OCI-LY7 (cell line): ENCODE measurements at regions of chrX and their contacts with region 1.

Region 1: DNA sequence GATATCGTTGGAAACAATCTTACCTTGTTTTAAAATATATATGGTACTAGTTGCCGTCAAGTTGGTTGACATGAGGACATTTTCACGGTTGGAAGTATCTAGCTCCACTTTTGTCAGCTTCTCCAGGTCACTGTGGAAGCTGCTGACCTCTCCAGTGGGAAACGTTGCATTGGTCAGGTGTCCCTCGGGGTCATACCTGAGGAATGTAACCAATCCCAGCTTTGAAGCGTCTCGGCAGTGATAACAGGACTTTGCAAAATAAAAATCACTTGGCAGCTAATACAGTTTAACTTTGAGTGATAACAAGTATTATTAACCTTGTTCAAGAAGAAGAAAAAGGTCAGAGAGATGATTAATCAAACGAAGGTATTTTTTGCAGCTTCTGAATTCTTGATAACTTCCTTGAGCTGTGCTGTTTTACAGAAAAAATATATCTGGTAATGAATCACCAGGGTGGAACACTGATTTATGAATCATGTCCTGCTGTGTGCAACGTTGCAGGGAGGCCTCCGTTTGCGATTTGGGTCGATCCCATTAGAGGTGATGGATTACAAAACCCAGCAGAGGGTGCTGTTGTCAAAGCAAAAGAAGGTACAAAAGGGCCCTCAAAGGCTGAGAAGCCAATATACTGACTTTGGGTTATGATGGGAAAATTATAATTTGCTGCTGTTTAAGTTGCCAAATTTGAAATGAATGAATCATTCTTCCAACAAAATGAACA is 60.1 kb downstream of the SH2D1A start:
- DNase-seq: peak; percentile 79
- H3K4me3 ChIP-seq: no peak overlapping the region
- H3K27ac ChIP-seq: peak overlapping the region; percentile 28
- H3K4me1 ChIP-seq: peaks cover 55% of the 10 kb centered on the region
- CTCF ChIP-seq: peak; percentile 80

Region 2: DNA sequence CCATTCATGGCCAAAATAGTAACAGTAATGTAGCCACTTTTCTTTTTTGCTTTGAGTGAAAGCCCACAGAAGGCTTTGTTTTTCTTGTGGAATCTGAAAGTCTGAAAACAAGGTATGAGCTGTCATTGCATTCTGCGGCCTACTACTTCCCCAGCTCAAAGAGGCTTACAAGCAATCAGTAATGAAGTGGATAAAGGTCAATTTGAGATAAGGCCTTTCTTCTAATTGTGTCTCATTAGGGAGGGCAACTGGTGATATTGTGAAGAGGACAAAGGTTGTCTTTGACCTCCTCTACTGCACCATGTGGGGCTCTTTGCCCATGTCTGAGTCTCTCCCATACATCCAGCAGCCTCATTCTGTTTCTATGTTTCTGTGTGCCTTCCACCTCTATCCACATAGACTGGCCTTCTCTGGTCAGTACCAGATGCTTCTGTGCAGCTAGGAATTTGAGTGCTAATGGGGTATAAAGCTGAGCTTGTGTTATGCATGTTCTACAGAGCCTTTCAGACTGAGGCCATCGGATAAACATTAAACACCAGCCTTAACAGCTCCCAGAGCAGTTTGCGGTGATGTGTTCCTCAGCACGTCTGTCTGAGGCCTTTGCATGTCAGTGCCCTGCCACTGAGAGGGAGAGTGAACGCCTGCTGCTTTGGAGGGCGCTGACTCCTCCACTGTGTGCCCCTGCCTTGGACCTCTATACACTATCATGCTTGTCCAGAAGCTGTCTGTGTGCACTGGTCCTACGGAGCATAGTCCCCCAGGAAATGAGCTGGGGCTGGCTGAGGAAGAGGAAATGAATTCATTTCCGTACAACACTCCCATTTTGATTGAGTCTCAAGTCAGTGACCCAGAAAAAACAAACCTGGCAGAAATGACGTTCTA is 20.1 kb after region 1 on chrX:
- CTCF ChIA-PET with region 1: no interaction called
- POLR2A ChIA-PET with region 1: no interaction called
- intact Hi-C with region 1: no loop called
- DNase-seq: no peak
- H3K4me3 ChIP-seq: no peak overlapping the region
- H3K27ac ChIP-seq: no peak overlapping the region
- H3K4me1 ChIP-seq: no peaks in the 10 kb centered on the region
- CTCF ChIP-seq: no peak

Region 3: DNA sequence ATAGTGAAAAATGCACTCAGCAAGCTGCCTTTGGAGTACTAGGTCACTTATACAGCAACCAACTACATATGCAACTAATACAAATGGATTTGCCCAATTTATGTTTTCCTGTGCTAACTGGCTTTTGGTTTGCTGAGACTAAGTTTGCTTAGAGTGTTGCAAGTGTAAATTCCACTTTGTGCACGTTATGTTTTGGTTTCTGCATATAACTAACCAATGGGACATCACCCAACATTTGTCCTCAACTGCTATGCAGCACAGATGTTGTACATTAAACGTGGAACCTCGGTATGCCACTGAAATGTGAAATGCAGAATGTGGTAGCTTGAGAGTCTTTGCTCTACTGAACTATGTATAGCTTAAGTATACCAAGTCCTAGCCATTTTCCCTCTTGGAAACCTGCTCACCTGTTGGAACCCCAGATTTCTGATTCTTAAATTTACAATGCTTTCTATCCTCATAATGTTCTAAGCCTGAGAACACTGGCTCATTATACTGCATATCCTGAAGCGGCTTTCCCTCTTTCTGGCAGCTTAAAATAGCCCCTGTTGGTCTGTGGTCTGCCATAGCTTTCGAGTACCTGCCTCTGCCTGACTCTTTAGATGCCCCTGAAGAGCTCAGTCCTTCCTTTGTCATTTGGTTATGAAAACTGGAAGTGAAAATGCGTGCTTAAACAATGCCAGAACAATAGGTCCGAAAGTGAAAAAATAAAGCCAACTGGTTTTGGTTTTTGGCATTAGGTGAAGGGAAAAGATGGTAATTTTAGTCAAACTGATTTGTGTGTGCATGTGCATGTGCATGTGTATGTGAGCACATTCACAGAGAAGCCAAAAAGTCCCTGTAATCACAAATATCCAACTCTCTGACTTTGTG is 97.9 kb after region 1 on chrX:
- CTCF ChIA-PET with region 1: no interaction called
- POLR2A ChIA-PET with region 1: no interaction called
- intact Hi-C with region 1: loop called (anchors 10 kb)
- DNase-seq: peak; percentile 79
- H3K4me3 ChIP-seq: peak overlapping the region; percentile 44
- H3K27ac ChIP-seq: peak overlapping the region; percentile 73
- H3K4me1 ChIP-seq: peaks cover 32% of the 10 kb centered on the region
- CTCF ChIP-seq: no peak

Region 4: DNA sequence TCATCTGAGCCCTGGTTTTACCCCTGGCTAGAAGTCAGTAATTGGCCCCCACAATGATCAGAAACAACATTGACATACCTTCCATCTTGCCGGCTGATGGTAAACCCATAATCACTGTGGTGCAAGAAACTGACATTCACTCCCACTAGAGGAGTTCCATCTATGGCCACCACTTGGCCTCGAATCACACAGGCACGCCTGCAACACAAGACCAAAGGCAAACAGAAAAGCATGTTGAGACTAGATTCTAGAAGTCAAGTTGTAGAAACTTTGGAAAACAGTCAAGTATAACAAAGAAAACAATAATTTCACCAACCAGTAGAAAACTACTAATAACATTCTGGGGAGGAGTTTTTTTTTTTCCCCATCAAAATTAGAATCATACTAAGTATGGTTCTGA is 123.3 kb after region 1 on chrX:
- CTCF ChIA-PET with region 1: no interaction called
- POLR2A ChIA-PET with region 1: no interaction called
- intact Hi-C with region 1: no loop called
- DNase-seq: no peak
- H3K4me3 ChIP-seq: no peak overlapping the region
- H3K27ac ChIP-seq: no peak overlapping the region
- H3K4me1 ChIP-seq: no peaks in the 10 kb centered on the region
- CTCF ChIP-seq: no peak

Region 5: DNA sequence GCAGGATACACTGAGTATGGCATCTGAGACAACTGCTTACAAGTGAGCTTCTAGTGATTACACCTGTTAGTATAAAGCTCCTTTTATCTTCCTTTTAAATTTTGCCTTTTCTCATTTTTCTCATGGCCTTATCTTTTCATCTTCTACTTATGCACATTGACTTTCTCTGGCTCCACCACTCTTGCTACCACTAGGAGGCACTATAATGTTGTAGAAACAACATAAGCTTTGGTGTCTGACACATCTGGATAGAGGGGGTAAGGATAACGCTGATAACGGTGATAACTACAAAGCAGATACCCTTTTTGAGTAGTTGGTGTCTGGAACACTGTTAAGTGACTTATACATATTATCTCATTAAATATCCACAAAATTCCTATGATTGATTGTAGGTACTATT is 725.8 kb after region 1 on chrX:
- CTCF ChIA-PET with region 1: no interaction called
- POLR2A ChIA-PET with region 1: no interaction called
- intact Hi-C with region 1: loop called (anchors 5 kb)
- DNase-seq: peak; percentile 28
- H3K4me3 ChIP-seq: no peak overlapping the region
- H3K27ac ChIP-seq: no peak overlapping the region
- H3K4me1 ChIP-seq: no peaks in the 10 kb centered on the region
- CTCF ChIP-seq: peak; percentile 76

Region 6: GRCh38 chrX:125681507-125681906 is 1275.1 kb after region 1 on chrX:
- CTCF ChIA-PET with region 1: no interaction called
- POLR2A ChIA-PET with region 1: no interaction called
- intact Hi-C with region 1: loop called (anchors 10 kb)
- DNase-seq: peak; percentile 84
- H3K4me3 ChIP-seq: peak overlapping the region; percentile 41
- H3K27ac ChIP-seq: peak overlapping the region; percentile 93
- H3K4me1 ChIP-seq: peaks cover 34% of the 10 kb centered on the region
- CTCF ChIP-seq: no peak